PC-9 (cell line): ENCODE measurements at regions of chr1 and their contacts with region 1.

Region 1: GRCh38 chr1:27044613-27045151 is 32.0 kb upstream of the TENT5B start:
- DNase-seq: peak; percentile 52 to 84
- H3K4me3 ChIP-seq: no peak overlapping the region
- H3K27ac ChIP-seq: no peak overlapping the region
- H3K4me1 ChIP-seq: no peaks in the 10 kb centered on the region
- H3K27me3 ChIP-seq: no peaks in the 10 kb centered on the region
- CTCF ChIP-seq: peak; percentile 89

Region 2: GRCh38 chr1:26169669-26170471 is 874.8 kb before region 1 on chr1 and contains the start of gene ZNF593:
- CTCF ChIA-PET with region 1: no interaction called
- POLR2A ChIA-PET with region 1: no interaction called
- intact Hi-C with region 1: no loop called
- DNase-seq: peak; percentile 81 to 89
- H3K4me3 ChIP-seq: peak within 1 kb of the TSS; percentile 99
- H3K27ac ChIP-seq: no peak within 1 kb of the TSS
- H3K4me1 ChIP-seq: peaks cover 6% of the 10 kb centered on the region; the same call in 1 of the 2 replicates
- H3K27me3 ChIP-seq: no peaks in the 10 kb centered on the region
- CTCF ChIP-seq: peak; percentile 86
- total RNA-seq, gene ZNF593: 37.0 and 55.9 TPM in 2 replicates

Region 3: GRCh38 chr1:26705788-26706311 is 338.8 kb before region 1 on chr1:
- CTCF ChIA-PET with region 1: no interaction called
- POLR2A ChIA-PET with region 1: no interaction called
- intact Hi-C with region 1: no loop called
- DNase-seq: peak; percentile 40 to 94
- H3K4me3 ChIP-seq: peak overlapping the region; percentile 6; the same call in 1 of the 2 replicates
- H3K27ac ChIP-seq: peak overlapping the region; percentile 90
- H3K4me1 ChIP-seq: peaks cover 69% of the 10 kb centered on the region
- H3K27me3 ChIP-seq: no peaks in the 10 kb centered on the region
- CTCF ChIP-seq: no peak

Region 4: DNA sequence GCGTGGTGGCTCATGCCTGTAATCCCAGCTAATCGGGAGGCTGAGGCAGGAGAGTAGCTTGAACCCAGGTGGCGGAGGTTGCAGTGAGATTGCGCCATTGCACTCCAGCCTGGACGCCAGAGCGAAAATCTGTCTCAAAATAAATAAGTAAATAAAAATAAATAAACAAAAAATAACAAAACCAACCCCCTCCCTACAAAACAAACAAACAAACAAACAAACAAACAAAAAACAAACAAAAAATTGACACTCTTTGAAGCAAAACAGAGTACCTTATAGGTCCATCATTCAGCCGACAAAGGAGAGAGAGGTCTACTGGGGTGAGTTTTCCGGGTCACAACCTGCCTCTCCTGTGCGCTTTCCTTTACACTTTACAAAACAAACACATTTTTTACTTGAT is 79.0 kb before region 1 on chr1:
- CTCF ChIA-PET with region 1: no interaction called
- POLR2A ChIA-PET with region 1: no interaction called
- intact Hi-C with region 1: loop called (anchors 2 kb)
- DNase-seq: no peak
- H3K4me3 ChIP-seq: no peak overlapping the region
- H3K27ac ChIP-seq: no peak overlapping the region
- H3K4me1 ChIP-seq: peaks cover 19% of the 10 kb centered on the region
- H3K27me3 ChIP-seq: no peaks in the 10 kb centered on the region
- CTCF ChIP-seq: no peak

Region 5: GRCh38 chr1:26999440-26999987 is 45.2 kb before region 1 on chr1:
- CTCF ChIA-PET with region 1: interaction called, 23 read pairs
- POLR2A ChIA-PET with region 1: no interaction called
- intact Hi-C with region 1: loop called (anchors 1 kb)
- DNase-seq: peak; percentile 70 to 81
- H3K4me3 ChIP-seq: no peak overlapping the region
- H3K27ac ChIP-seq: peak overlapping the region; percentile 62
- H3K4me1 ChIP-seq: peaks cover 40% of the 10 kb centered on the region
- H3K27me3 ChIP-seq: no peaks in the 10 kb centered on the region
- CTCF ChIP-seq: no peak

Region 6: GRCh38 chr1:27021354-27022031 is 23.2 kb before region 1 on chr1:
- CTCF ChIA-PET with region 1: no interaction called
- POLR2A ChIA-PET with region 1: no interaction called
- intact Hi-C with region 1: no loop called
- DNase-seq: no peak
- H3K4me3 ChIP-seq: no peak overlapping the region
- H3K27ac ChIP-seq: no peak overlapping the region
- H3K4me1 ChIP-seq: peaks cover 12% of the 10 kb centered on the region; the same call in 1 of the 2 replicates
- H3K27me3 ChIP-seq: no peaks in the 10 kb centered on the region
- CTCF ChIP-seq: no peak

Region 7: DNA sequence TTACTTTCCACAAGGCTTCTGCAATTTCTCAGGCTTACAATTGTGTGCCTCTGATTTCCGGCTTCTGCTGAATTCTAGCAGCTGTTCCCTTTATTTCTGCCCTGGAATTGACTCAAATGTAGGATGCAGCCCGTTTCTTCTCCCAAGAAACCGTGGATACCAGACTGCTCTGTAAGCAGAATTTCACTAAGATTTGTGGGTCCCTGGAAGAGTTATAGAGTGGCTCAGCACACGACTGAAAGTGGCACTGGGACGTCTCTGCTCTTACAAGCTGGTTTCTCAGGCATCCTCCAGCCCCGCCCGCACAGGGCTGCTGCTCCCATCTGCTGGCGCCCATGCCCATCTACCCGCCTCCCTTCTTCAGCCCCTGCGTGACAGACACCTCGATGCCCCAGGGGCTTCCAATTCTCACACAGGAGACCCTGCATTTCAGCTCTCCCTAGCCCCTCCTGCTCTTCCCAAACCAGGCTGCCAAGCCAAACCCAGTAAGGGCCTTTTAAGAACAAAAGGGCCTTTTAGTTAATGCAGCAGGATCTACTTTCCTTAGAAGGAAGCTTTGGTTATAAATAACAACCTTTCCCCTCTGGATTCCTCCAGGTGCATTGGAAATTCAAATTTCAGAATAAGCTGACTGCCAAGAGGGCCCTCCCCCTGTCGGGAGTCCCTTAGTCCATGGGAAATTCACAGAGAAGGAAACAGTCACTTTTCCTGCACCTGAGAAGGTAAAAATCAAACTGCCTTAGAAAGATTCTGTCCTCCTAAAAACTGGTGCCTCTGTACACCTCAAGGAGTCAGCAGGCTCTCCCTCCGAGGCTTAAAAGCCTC is 13.3 kb after region 1 on chr1:
- CTCF ChIA-PET with region 1: interaction called, 12 read pairs
- POLR2A ChIA-PET with region 1: no interaction called
- intact Hi-C with region 1: no loop called
- DNase-seq: no peak
- H3K4me3 ChIP-seq: no peak overlapping the region
- H3K27ac ChIP-seq: no peak overlapping the region
- H3K4me1 ChIP-seq: no peaks in the 10 kb centered on the region
- H3K27me3 ChIP-seq: no peaks in the 10 kb centered on the region
- CTCF ChIP-seq: no peak

Region 8: DNA sequence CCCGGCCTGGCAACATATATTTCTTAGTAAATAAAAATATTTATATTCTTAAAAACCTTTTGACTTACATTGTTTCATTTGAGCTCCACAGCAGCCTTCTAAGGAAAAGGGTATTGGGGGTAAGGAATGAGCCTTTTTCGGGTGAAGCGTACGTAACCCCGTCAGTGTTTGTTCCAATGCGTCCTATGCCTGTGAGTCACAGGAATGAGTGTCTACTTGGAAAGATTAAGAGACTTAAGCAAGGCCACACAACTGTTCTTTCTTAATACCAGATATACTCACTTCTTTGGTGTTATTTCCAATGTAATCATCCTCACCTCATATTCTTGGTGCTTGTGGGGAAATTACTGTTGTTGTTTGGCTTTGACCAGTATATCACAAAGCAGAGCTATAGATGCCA is 212.5 kb after region 1 on chr1:
- CTCF ChIA-PET with region 1: no interaction called
- POLR2A ChIA-PET with region 1: no interaction called
- intact Hi-C with region 1: no loop called
- DNase-seq: no peak
- H3K4me3 ChIP-seq: no peak overlapping the region
- H3K27ac ChIP-seq: no peak overlapping the region
- H3K4me1 ChIP-seq: no peaks in the 10 kb centered on the region
- H3K27me3 ChIP-seq: no peaks in the 10 kb centered on the region
- CTCF ChIP-seq: no peak

Region 9: DNA sequence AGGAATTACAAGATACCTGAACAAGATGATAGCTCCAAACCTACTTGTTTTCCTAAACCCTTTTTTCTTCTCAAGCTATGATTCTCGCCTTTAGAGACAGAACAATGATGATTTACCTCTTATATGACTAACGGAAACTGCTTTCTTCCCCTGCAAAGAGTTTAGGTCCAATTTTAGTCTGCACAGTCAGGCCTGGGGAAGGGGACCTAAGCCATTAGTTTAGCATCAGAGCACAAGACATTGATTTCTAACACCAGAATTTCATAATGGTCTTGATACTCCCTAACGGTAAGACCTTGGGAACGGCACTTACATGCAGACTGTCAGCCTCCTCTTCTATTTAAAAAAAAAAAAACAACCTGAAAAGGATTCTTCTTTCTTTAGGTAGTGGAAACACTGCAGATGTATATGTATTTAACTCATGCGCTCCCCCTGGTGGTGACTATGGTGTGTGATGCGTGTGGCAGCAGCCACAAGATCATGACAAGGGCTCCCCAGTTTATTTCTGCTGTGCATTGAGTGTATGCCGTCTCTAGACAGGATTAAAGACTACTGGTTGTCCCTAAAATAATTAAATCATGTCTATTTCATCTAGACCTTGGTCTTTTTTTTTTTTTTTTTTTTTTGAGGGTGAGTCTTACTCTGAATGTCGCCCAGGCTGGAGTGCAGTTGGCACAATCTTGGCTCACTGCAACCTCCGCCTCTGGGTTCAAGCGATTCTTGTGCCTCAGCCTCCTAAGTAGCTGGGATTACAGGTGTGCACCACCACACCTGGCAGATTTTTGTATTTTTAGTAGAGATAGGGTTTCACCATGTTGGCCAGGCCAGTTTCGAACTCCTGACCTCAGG is 240.0 kb after region 1 on chr1:
- CTCF ChIA-PET with region 1: no interaction called
- POLR2A ChIA-PET with region 1: no interaction called
- intact Hi-C with region 1: loop called (anchors 5 kb)
- DNase-seq: peak; percentile 51 to 69
- H3K4me3 ChIP-seq: no peak overlapping the region
- H3K27ac ChIP-seq: no peak overlapping the region
- H3K4me1 ChIP-seq: no peaks in the 10 kb centered on the region
- H3K27me3 ChIP-seq: no peaks in the 10 kb centered on the region
- CTCF ChIP-seq: peak; percentile 77

Region 10: DNA sequence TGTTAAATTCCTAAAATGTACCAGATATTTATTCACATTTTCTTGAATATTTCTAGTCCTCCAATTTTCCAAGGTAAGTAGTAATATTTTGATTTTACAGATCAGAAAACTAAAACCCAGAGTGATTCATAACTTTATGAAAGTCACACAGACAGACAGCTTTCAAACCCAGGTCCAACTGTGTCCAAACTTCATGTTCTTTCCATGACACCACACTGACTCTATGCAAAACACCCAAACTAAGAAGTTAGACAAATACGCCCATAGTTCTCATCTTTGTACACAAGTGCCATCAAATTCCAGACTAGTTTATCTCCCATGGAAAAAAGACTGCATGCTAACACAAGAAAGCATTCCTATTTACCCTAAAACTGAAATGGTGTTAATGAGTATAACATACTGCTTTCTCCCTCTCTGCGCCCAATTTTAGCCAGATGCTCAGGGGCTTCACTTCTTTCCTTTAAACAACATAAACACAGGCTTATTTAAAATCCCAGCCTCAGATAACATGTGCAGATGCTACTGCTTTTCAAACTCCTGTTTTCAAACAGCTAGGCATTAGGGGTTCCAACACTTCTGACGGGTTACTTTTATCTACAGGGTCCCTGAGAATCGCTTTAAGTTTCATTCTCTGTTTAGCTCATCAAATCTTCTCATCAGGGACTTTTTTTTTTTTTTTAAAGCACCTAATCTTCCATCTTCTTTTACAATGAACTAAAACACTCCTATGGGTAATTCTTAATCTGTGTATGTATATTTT is 400.7 kb after region 1 on chr1:
- CTCF ChIA-PET with region 1: interaction called, 13 read pairs
- POLR2A ChIA-PET with region 1: no interaction called
- intact Hi-C with region 1: no loop called
- DNase-seq: no peak
- H3K4me3 ChIP-seq: no peak overlapping the region
- H3K27ac ChIP-seq: no peak overlapping the region
- H3K4me1 ChIP-seq: no peaks in the 10 kb centered on the region
- H3K27me3 ChIP-seq: no peaks in the 10 kb centered on the region
- CTCF ChIP-seq: no peak